ENCODE measurements at regions of chr3 and their contacts with region 1.

Region 1: GRCh38 chr3:60096403-60096802 is 1046.6 kb upstream of the CFAP20DC start:
- DNase-seq: no peak
- ATAC-seq: no peak
- H3K4me3 ChIP-seq: no peak overlapping the region
- H3K27ac ChIP-seq: no peak overlapping the region
- H3K4me1 ChIP-seq: no peaks in the 10 kb centered on the region
- H3K27me3 ChIP-seq: no peaks in the 10 kb centered on the region
- CTCF ChIP-seq: no peak

Region 2: DNA sequence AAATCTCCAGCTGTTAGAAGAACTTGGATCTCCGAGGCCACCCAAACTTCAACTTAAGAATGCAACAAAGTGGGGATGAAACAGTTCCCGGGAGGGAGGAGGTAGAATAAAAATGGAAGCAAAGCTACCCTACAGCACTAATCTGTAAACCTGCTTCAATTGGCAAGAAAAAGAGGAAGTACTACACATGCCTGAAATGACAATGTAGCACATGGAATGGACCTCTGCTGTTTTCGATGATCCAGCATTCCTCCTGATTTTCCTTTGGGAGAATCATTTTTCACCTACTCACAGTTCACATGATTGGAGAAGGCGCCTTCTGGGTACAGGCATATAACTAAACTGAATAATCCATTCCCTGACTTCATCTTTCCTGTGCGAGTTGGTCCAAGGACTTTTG is 73.4 kb after region 1 on chr3:
- intact Hi-C with region 1: no loop called
- DNase-seq: no peak
- ATAC-seq: no peak
- H3K4me3 ChIP-seq: no peak overlapping the region
- H3K27ac ChIP-seq: no peak overlapping the region
- H3K4me1 ChIP-seq: no peaks in the 10 kb centered on the region
- H3K27me3 ChIP-seq: no peaks in the 10 kb centered on the region
- CTCF ChIP-seq: no peak

Region 3: GRCh38 chr3:60456180-60456579 is 359.8 kb after region 1 on chr3:
- intact Hi-C with region 1: no loop called
- DNase-seq: no peak
- ATAC-seq: no peak
- H3K4me3 ChIP-seq: no peak overlapping the region
- H3K27ac ChIP-seq: no peak overlapping the region
- H3K4me1 ChIP-seq: no peaks in the 10 kb centered on the region
- H3K27me3 ChIP-seq: no peaks in the 10 kb centered on the region
- CTCF ChIP-seq: no peak

Region 4: DNA sequence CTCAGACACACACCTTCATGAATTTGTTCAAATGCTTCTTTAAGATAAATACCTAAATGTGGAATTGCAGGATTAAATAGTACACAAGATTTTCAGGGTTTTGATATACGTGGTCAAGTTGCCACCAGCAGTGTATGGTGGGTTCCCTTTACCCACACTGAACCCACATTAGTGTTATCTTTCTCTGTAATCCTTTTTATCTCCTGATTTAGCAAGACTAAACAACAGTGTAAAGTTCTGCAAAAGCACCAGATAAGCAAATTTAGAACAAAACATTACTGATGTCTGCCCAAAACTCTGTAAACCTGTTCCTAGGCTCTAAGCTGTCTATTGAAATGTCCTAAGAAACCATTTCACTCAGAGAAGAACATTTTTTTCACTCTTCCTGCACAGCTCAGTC is 801.9 kb after region 1 on chr3:
- intact Hi-C with region 1: loop called in 1 of 2 experiments (anchors 5 kb)
- DNase-seq: no peak
- ATAC-seq: no peak
- H3K4me3 ChIP-seq: no peak overlapping the region
- H3K27ac ChIP-seq: no peak overlapping the region
- H3K4me1 ChIP-seq: no peaks in the 10 kb centered on the region
- H3K27me3 ChIP-seq: no peaks in the 10 kb centered on the region
- CTCF ChIP-seq: no peak